ENCODE measurements at regions of chr15 and their contacts with region 1.

Region 1: GRCh38 chr15:62935300-62936081 is 107.1 kb upstream of the TPM1 start:
- DNase-seq: no peak
- ATAC-seq: peak in 5 of 8 donors; percentile 7 to 48 (median 13)
- H3K4me3 ChIP-seq: no peak overlapping the region
- H3K27ac ChIP-seq: peak overlapping the region in 1 of 10 donors; percentile 17
- H3K4me1 ChIP-seq: peaks cover 6 to 54% (median 21%) of the 10 kb centered on the region in 9 donors
- H3K27me3 ChIP-seq: no peaks in the 10 kb centered on the region
- CTCF ChIP-seq: no peak

Region 2: GRCh38 chr15:63006032-63006878 is 70.8 kb after region 1 on chr15:
- intact Hi-C with region 1: loop called in 1 of 10 experiments (anchors 10 kb)
- DNase-seq: no peak
- ATAC-seq: peak in 6 of 8 donors; percentile 49 to 81 (median 66)
- H3K4me3 ChIP-seq: no peak overlapping the region
- H3K27ac ChIP-seq: no peak overlapping the region
- H3K4me1 ChIP-seq: peaks cover 0 to 7% (median 0%) of the 10 kb centered on the region in 9 donors
- H3K27me3 ChIP-seq: no peaks in the 10 kb centered on the region
- CTCF ChIP-seq: no peak

Region 3: GRCh38 chr15:63030101-63030551 is 94.6 kb after region 1 on chr15:
- intact Hi-C with region 1: loop called in 1 of 10 experiments (anchors 10 kb)
- DNase-seq: no peak
- ATAC-seq: peak in 6 of 8 donors; percentile 55 to 83 (median 74)
- H3K4me3 ChIP-seq: no peak overlapping the region
- H3K27ac ChIP-seq: no peak overlapping the region
- H3K4me1 ChIP-seq: peaks cover 0 to 12% (median 0%) of the 10 kb centered on the region in 9 donors
- H3K27me3 ChIP-seq: no peaks in the 10 kb centered on the region
- CTCF ChIP-seq: no peak